ENCODE measurements at regions of chr9 and their contacts with region 1.

Region 1: DNA sequence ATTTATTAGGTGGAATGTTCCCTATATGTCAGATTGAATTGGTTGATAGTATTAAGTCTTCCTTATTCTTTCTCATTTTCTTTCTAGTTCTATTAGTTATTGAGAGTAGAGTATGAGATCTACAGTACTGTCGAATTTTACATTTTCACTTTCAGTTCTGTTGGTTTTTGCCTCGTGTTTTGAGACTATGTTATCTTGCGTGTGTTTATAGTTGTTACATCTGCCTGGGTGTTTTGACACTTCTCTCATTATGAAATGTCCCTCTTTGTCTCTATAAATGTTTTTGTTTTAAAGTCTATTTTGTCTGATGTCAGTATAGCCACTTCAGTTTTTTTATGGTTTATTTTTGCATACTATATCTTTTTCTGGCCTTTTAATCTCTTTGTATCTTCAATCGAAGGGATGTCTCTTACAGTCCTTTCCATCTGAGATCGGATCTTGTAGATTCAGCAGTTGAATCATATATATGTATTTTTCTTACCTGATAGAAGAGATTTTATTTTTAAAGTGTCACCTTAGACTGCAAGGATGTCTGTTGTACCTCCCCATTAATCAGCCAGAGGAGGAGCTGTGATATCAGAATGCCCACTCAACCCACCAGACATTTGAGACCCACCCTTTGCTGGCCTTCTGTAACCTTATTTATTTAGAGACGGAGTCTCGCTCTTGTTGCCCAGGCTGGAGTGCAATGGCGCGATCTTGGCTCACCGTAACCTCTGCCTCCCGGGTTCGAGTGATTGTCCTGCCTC is 20.7 kb downstream of the EHMT1 start:
- DNase-seq: peak in 1 of 2 donors; percentile 60
- ATAC-seq: peak; percentile 87 to 95 (median 90)
- H3K4me3 ChIP-seq: peak overlapping the region; percentile 26
- H3K4me3 Mint-ChIP-seq: peak overlapping the region; percentile 87
- H3K27ac ChIP-seq: peak overlapping the region; percentile 83
- H3K27ac Mint-ChIP-seq: peak overlapping the region; percentile 85 to 96
- H3K4me1 ChIP-seq: peaks cover 15% of the 10 kb centered on the region
- H3K4me1 Mint-ChIP-seq: peaks cover 34 to 44% of the 10 kb centered on the region in 2 donors
- H3K27me3 ChIP-seq: no peaks in the 10 kb centered on the region
- H3K27me3 Mint-ChIP-seq: no peaks in the 10 kb centered on the region
- CTCF ChIP-seq: no peak

Region 2: GRCh38 chr9:137715321-137715720 is 75.8 kb after region 1 on chr9:
- intact Hi-C with region 1: loop called (anchors 10 kb)
- DNase-seq: no peak
- ATAC-seq: no peak
- H3K4me3 ChIP-seq: no peak overlapping the region
- H3K4me3 Mint-ChIP-seq: peak overlapping the region; percentile 76
- H3K27ac ChIP-seq: peak overlapping the region; percentile 55
- H3K27ac Mint-ChIP-seq: peak overlapping the region; percentile 89 to 94
- H3K4me1 ChIP-seq: peaks cover 21% of the 10 kb centered on the region
- H3K4me1 Mint-ChIP-seq: peaks cover 41 to 45% of the 10 kb centered on the region in 2 donors
- H3K27me3 ChIP-seq: no peaks in the 10 kb centered on the region
- H3K27me3 Mint-ChIP-seq: peaks cover 0 to 3% of the 10 kb centered on the region in 2 donors
- CTCF ChIP-seq: no peak